Pancreas (tissue), 10 donors: ENCODE measurements at regions of chr1 and their contacts with region 1.

Region 1: GRCh38 chr1:31548907-31549808 is 27.2 kb upstream of the TINAGL1 start:
- DNase-seq: peak; percentile 80 to 95 (median 90)
- ATAC-seq: peak; percentile 90 to 98 (median 97)
- H3K4me3 ChIP-seq: peak overlapping the region in 1 of 4 donors; percentile 13
- H3K27ac ChIP-seq: peak overlapping the region in 2 of 4 donors; percentile 34 to 37
- H3K4me1 ChIP-seq: peaks cover 0 to 13% (median 8%) of the 10 kb centered on the region in 3 donors
- H3K27me3 ChIP-seq: no peaks in the 10 kb centered on the region
- CTCF ChIP-seq: peak; percentile 95 to 99 (median 96)

Region 2: GRCh38 chr1:31182352-31182751 is 366.8 kb before region 1 on chr1:
- intact Hi-C with region 1: loop called in 2 of 3 experiments (anchors 5 to 10 kb)
- DNase-seq: peak; percentile 57 to 89 (median 74)
- ATAC-seq: peak; percentile 86 to 91 (median 89)
- H3K4me3 ChIP-seq: peak overlapping the region in 3 of 4 donors; percentile 8 to 39 (median 12)
- H3K27ac ChIP-seq: no peak overlapping the region
- H3K4me1 ChIP-seq: peaks cover 0 to 9% (median 7%) of the 10 kb centered on the region in 3 donors
- H3K27me3 ChIP-seq: peaks cover 0 to 6% (median 0%) of the 10 kb centered on the region in 4 donors
- CTCF ChIP-seq: no peak

Region 3: GRCh38 chr1:31189696-31190674 is 359.2 kb before region 1 on chr1:
- intact Hi-C with region 1: loop called in 2 of 3 experiments (anchors 5 to 10 kb)
- DNase-seq: no peak
- ATAC-seq: no peak
- H3K4me3 ChIP-seq: no peak overlapping the region
- H3K27ac ChIP-seq: no peak overlapping the region
- H3K4me1 ChIP-seq: no peaks in the 10 kb centered on the region
- H3K27me3 ChIP-seq: no peaks in the 10 kb centered on the region
- CTCF ChIP-seq: no peak

Region 4: DNA sequence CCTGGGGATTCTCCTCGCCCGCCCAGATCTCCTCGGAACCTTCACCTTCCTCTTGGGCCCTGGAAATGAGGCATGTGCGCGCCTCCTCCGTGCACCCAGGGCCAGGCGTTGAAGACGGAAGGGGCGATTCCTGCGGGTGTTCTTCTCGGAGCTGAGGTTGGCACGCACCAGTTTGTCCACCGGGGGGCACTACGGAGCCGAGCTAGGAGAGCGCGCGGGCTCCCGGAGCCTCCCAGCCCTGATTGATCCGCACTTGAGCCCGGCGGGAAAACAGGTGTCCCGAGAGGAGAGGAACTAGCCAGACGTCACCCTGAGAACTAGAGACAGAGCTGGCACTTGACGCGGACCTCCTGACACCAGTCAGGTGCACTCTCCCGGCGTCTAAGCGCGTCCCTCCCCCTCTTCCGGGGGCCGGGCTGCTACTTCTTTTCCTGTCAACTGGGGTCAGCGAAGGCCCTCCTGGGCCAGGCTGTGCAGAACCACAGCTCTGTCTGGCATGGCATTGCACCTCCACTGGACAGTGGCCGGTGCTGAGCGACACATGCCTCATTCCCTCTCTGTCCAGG is 154.4 kb before region 1 on chr1:
- intact Hi-C with region 1: loop called in 2 of 3 experiments (anchors 5 to 10 kb)
- DNase-seq: peak; percentile 77 to 96 (median 89)
- ATAC-seq: peak; percentile 98 to 99 (median 99)
- H3K4me3 ChIP-seq: peak overlapping the region in 2 of 4 donors; percentile 21 to 31
- H3K27ac ChIP-seq: no peak overlapping the region
- H3K4me1 ChIP-seq: no peaks in the 10 kb centered on the region
- H3K27me3 ChIP-seq: no peaks in the 10 kb centered on the region
- CTCF ChIP-seq: peak; percentile 86 to 93 (median 88)